SK-N-SH (cell line): ENCODE measurements at regions of chr14 and their contacts with region 1.

Region 1: DNA sequence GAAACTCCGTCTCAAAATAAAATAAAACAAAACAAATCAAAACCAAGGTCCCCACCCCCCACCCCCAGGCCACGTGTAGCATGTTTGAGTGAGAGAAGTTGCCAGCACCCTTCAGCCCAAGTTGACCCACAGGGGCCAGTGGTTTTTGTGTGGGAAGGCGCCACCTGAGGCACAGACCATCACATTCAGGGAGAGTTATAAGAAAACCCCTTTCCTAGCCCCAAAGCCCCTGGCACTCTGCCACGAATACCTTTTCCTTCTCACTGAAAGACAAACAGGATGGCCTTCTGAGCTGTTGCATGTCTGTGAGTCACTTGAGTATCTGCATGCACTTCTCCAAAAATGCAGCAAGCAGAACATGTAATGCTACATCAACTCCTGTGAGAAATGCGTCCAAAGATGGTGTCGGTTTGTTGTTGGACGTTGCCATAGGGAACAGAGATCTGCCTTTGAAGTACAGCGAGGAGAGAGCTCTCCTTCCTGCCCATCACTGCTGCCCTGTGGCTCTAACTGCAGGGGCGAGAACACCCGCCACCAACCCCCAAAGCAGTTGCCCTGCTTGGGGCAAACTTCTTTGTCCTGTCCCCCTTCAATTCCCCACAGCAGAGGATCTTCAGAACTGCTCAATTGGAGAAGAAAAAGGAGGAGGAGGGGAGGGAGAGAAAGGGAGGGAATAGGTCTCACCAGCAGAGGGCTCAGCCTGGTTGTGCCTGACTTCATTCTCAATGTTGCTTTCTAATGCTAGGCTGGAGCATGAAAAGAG is 2.7 kb upstream of the TRAF3 start:
- DNase-seq: peak; percentile 80
- H3K4me3 ChIP-seq: peak overlapping the region in 1 of 2 experiments; percentile 31; a peak in 1 of 4 replicates
- H3K27ac ChIP-seq: no peak overlapping the region
- H3K4me1 ChIP-seq: peaks cover 9 to 12% of the 10 kb centered on the region in 2 experiments; a peak in 3 of 4 replicates
- H3K27me3 ChIP-seq: no peaks in the 10 kb centered on the region
- CTCF ChIP-seq: peak; percentile 73
- EP300 ChIP-seq: no peak
- RAD21 ChIP-seq: peak; percentile 78

Region 2: DNA sequence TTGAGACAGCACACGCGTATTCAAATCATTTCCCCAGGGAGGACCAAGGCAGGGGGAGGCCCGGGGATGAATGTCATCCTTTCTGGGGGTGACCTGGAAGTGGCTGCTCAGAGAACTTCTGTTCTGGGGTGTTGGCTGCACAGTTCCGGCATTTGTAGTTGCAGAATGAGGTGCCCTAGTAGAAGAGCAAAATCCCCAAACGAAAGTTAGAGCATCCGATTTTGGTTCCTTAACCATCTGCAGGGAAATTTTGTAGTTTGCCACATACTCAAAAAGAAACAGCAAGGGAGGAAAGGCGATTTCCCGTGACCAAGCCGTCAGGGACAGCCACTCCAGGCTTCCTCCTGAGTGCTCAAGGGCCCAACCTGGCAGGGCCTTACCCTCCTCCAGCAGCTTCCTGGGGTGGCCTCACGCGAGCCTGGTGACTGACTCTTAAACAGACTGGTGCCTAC is 10.3 kb before region 1 on chr14:
- CTCF ChIA-PET with region 1: interaction called, 27 read pairs
- POLR2A ChIA-PET with region 1: no interaction called
- DNase-seq: no peak
- H3K4me3 ChIP-seq: no peak overlapping the region
- H3K27ac ChIP-seq: no peak overlapping the region
- H3K4me1 ChIP-seq: no peaks in the 10 kb centered on the region; a peak in 1 of 4 replicates
- H3K27me3 ChIP-seq: no peaks in the 10 kb centered on the region
- CTCF ChIP-seq: no peak
- EP300 ChIP-seq: no peak
- RAD21 ChIP-seq: no peak

Region 3: GRCh38 chr14:102917469-102918211 is 143.1 kb after region 1 on chr14:
- CTCF ChIA-PET with region 1: interaction called, 15 read pairs
- POLR2A ChIA-PET with region 1: no interaction called
- DNase-seq: peak; percentile 87
- H3K4me3 ChIP-seq: peak overlapping the region in 1 of 2 experiments; percentile 26; a peak in 1 of 4 replicates
- H3K27ac ChIP-seq: no peak overlapping the region
- H3K4me1 ChIP-seq: no peaks in the 10 kb centered on the region
- H3K27me3 ChIP-seq: no peaks in the 10 kb centered on the region; the same call in 1 of the 2 replicates
- CTCF ChIP-seq: peak; percentile 68
- EP300 ChIP-seq: no peak
- RAD21 ChIP-seq: peak; percentile 76